ENCODE measurements at regions of chr7 and their contacts with region 1.

Region 1: DNA sequence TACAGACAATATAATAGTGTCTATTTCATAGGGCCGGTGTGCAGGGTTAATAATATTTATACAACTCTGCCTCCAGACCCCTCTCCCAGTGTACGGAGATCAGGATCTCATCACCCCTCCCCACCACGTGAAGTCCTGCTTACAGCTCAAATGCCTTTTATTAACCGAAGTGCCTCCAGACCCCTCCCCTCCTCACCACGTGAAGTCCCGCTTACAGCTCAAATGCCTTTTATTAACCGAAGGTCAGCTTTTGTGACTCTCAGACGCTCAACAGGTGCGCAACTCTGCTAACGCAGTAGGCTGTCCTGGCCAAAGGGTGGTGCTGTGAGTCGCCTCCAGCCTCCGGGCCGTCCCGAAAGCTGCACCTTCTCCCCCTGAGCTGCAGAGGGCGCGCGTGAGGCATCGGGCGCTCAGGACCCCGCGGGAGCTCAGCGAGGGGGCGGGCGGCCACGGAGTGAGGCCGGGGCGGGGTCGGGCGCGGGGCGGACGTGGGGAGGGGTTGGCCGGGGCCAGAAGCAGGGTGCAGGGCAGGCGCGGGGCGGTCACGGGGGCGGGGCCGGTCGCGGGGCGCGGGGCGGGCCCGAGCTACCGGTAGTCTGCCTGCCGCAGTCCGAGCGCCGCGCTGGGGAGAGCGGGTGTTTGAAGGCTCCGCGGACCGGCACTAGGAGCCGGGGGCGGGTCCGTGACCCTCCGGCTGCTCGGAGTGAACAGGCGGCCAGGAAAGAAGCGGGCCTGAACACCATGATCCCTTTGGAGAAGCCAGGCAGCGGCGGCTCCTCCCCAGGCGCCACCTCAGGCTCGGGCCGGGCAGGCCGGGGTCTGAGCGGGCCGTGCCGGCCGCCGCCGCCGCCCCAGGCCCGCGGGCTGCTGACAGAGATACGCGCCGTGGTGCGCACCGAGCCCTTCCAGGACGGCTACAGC is at the start of gene STK17A:
- DNase-seq: peak; percentile 89 to 98
- H3K4me3 ChIP-seq: peak within 1 kb of the TSS; percentile 97
- CTCF ChIP-seq: peak in 2 of 3 donors; percentile 92 to 96
- POLR2A ChIP-seq: peak in 1 of 2 donors; percentile 35
- total RNA-seq, gene STK17A: 6.5 to 17.1 (median 13.3) TPM

Region 2: GRCh38 chr7:42035210-42035609 is 1547.6 kb before region 1 on chr7:
- intact Hi-C with region 1: no loop called
- DNase-seq: no peak
- H3K4me3 ChIP-seq: no peak overlapping the region
- CTCF ChIP-seq: no peak
- POLR2A ChIP-seq: no peak

Region 3: DNA sequence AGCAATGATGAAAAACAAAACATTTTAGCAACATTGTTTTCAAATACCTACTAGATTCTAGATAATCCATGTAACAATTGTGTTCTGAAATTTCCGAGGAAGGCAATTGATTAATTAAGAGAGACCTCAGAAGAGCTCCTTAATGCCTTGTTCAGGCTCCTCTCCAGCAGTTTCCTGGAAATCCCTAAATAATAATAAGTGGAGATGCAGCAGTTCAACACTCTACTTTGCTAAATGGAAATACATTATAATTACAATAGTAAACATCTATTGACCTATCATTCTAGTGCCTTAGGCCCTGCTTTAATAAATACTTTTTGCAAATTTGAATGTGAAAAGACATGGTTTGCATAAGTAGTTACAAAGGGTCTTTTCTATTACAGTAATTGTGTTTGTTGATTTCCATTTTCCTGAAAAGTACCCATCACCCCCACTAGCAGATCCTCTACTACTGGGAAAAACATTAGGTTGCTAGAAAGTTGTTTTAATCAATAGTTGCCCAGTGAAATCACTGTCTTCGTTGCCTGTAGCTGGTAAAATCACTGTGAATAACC is 186.5 kb before region 1 on chr7:
- intact Hi-C with region 1: no loop called
- DNase-seq: no peak
- H3K4me3 ChIP-seq: no peak overlapping the region
- CTCF ChIP-seq: no peak
- POLR2A ChIP-seq: no peak

Region 4: DNA sequence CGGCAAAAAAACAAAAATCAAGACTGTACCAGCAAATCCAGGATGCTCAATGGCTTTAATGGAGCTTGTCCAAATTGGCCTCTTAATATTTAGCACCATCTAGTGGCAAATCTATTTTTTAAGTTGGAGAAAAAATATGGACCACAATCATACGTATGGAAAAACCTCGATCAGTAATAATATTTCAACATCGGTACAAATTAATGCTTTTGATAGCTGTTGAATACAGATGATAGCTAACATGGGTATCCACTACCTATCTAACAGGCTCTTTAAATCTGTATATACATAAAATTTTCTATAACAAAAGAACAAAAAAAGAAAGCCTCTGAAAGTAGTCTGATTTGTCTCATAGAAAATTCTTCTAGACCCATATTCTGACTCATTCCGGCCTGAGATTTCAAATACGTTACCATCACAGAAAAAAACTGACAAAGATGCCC is 117.3 kb after region 1 on chr7:
- intact Hi-C with region 1: loop called (anchors 2 kb)
- DNase-seq: no peak
- H3K4me3 ChIP-seq: no peak overlapping the region
- CTCF ChIP-seq: no peak
- POLR2A ChIP-seq: no peak

Region 5: GRCh38 chr7:43721193-43721806 is 138.5 kb after region 1 on chr7:
- intact Hi-C with region 1: loop called (anchors 5 kb)
- DNase-seq: no peak
- H3K4me3 ChIP-seq: no peak overlapping the region
- CTCF ChIP-seq: peak in 1 of 3 donors; percentile 33
- POLR2A ChIP-seq: no peak

Region 6: GRCh38 chr7:43834463-43835251 is 251.9 kb after region 1 on chr7:
- intact Hi-C with region 1: loop called (anchors 10 kb)
- DNase-seq: no peak
- H3K4me3 ChIP-seq: no peak overlapping the region
- CTCF ChIP-seq: no peak
- POLR2A ChIP-seq: no peak